Sciatic nerve (tissue), 2 donors: ENCODE measurements at regions of chr5 and their contacts with region 1.

Region 1: DNA sequence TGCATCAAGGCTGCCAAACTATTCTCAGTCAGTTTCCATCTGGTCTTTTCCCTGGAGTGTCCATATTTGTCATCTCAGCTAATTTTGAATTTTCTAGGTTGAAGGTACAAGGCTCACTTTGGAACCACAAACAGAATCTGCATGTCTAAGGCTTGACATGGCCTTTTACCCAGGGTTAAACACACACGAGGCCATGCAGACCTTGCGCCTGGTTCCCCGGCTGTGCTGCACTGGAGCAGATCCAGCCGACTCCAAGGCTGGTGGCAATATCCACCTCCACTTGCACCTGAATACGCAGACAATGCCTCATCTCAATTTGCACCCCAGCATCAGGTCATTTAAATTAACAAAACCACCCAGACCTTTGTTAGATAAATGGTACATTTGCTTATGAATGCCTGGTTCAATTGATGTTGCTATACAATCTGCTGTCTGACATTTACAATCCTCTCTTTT is 276.2 kb downstream of the HSPA4 start:
- DNase-seq: no peak
- ATAC-seq: no peak

Region 2: GRCh38 chr5:132692632-132692967 is 635.4 kb before region 1 on chr5:
- intact Hi-C with region 1: loop called (anchors 5 kb)
- DNase-seq: no peak
- ATAC-seq: no peak